HepG2 (cell line): ENCODE measurements at regions of chr12 and their contacts with region 1.

Region 1: DNA sequence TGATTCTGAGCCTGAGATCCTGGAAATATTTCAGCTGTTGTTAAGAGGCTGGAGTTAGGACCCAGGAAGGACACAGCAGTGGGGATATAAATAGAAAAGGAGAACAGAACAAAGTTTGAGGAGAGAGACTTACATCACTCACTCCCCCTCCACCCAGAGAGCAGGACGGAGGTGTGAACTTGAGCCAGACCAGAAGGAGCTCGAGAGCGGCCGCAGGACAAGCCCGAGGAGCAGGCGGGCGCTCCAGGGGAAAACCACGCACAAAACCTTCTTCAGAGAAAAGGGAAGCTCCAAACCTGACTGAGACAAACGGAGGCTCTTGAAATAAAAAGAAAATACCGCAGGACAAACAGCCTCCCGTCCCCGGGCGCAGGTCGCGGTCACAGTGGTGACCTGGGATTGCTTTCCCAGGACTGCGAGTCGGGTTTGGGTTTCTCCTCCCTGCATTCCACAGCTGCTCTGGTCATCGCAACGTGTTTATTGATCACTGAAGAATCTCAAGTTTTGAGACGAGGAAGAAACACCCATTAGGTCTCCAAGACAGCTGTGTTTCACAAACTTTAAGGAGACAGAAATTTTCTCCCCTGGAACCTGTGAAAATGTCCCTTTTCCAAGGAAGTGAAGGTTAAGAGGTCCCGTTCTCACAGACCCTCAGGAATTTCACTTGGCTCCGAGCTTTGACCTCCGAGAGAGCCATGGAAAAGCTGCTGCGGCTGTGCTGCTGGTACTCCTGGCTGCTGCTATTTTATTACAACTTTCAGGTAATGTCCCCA is at the start of gene ADGRD1:
- DNase-seq: no peak
- ATAC-seq: peak; percentile 62
- H3K4me3 ChIP-seq: peak within 1 kb of the TSS; percentile 47 to 67 (median 52); a peak in 5 of 6 replicates
- H3K27ac ChIP-seq: peak within 1 kb of the TSS; percentile 17
- H3K4me1 ChIP-seq: peaks cover 42% of the 10 kb centered on the region
- H3K27me3 ChIP-seq: peaks cover 0 to 3% of the 10 kb centered on the region in 2 experiments; a peak in 2 of 5 replicates
- CTCF ChIP-seq: no peak
- EP300 ChIP-seq: no peak
- POLR2A ChIP-seq: peak in 1 of 2 experiments; percentile 35; a peak in 1 of 4 replicates
- RAD21 ChIP-seq: no peak
- total RNA-seq, gene ADGRD1: 0.34 and 0.46 TPM in 2 replicates

Region 2: GRCh38 chr12:130849561-130850417 is 104.2 kb before region 1 on chr12:
- CTCF ChIA-PET with region 1: no interaction called
- POLR2A ChIA-PET with region 1: no interaction called
- in situ Hi-C with region 1: no loop called
- intact Hi-C with region 1: no loop called
- DNase-seq: peak; percentile 89
- ATAC-seq: peak; percentile 80
- H3K4me3 ChIP-seq: peak overlapping the region in 1 of 3 experiments; percentile 7; a peak in 1 of 6 replicates
- H3K27ac ChIP-seq: peak overlapping the region; percentile 61
- H3K4me1 ChIP-seq: peaks cover 74% of the 10 kb centered on the region
- H3K27me3 ChIP-seq: no peaks in the 10 kb centered on the region
- CTCF ChIP-seq: no peak
- EP300 ChIP-seq: peak in 1 of 2 experiments; percentile 31; a peak in 2 of 4 replicates
- POLR2A ChIP-seq: no peak
- RAD21 ChIP-seq: no peak

Region 3: GRCh38 chr12:130973109-130973508 is 19.2 kb after region 1 on chr12:
- CTCF ChIA-PET with region 1: no interaction called
- POLR2A ChIA-PET with region 1: interaction called, 13 read pairs
- in situ Hi-C with region 1: no loop called
- intact Hi-C with region 1: no loop called
- DNase-seq: no peak
- ATAC-seq: no peak
- H3K4me3 ChIP-seq: no peak overlapping the region
- H3K27ac ChIP-seq: peak overlapping the region; percentile 79
- H3K4me1 ChIP-seq: peaks cover 50% of the 10 kb centered on the region
- H3K27me3 ChIP-seq: no peaks in the 10 kb centered on the region
- CTCF ChIP-seq: no peak
- EP300 ChIP-seq: no peak
- POLR2A ChIP-seq: no peak
- RAD21 ChIP-seq: no peak

Region 4: DNA sequence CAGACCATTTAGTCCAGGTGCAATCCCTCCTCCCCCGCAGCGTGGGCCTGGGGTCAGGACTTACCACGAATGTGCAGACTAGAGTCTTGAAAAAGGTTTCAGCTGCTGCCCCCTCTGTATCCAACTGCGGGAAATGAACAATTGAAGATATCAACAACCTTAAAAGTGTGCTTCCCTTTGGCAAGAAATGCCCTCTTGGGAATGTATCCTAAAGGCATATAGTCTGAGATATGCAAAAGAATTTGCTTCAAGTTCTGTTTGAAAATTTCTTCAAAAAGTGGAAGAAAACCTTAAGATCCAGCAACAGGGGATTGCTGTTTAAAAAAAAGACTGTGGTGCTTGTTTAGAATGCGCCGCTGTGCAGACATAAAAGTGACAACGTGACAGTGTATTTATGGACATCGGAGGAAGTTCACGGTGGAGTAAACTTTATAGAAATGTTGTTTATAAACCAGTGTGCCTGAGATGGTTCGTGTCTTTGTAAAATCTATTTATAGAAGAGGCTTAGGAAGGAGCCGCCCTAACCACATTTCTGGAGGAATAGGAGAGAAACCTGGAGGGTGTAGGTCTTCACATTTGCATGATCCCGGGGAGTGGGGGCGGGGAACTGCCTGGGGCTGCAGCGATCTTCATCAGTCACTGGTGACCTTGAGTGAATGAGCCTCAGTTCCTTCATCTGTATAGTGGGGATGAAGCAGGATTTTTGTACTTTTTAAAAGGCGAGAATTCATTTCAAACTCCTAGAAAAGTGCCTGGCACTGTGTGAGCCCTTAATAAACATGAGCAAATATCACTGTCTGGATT is 27.2 kb after region 1 on chr12:
- CTCF ChIA-PET with region 1: no interaction called
- POLR2A ChIA-PET with region 1: interaction called, 13 read pairs
- in situ Hi-C with region 1: no loop called
- intact Hi-C with region 1: no loop called
- DNase-seq: no peak
- ATAC-seq: no peak
- H3K4me3 ChIP-seq: no peak overlapping the region
- H3K27ac ChIP-seq: no peak overlapping the region
- H3K4me1 ChIP-seq: peaks cover 76% of the 10 kb centered on the region
- H3K27me3 ChIP-seq: no peaks in the 10 kb centered on the region
- CTCF ChIP-seq: no peak
- EP300 ChIP-seq: no peak
- POLR2A ChIP-seq: no peak
- RAD21 ChIP-seq: no peak